Thyroid gland (tissue), 4 donors: ENCODE measurements at regions of chr3 and their contacts with region 1.

Region 1: GRCh38 chr3:110542552-110543150 is 529.0 kb upstream of the NECTIN3 start:
- DNase-seq: no peak
- H3K4me3 ChIP-seq: no peak overlapping the region
- H3K27ac ChIP-seq: no peak overlapping the region
- H3K4me1 ChIP-seq: no peaks in the 10 kb centered on the region
- H3K27me3 ChIP-seq: no peaks in the 10 kb centered on the region
- CTCF ChIP-seq: no peak
- POLR2A ChIP-seq: no peak

Region 2: GRCh38 chr3:109927161-109927560 is 615.5 kb before region 1 on chr3:
- intact Hi-C with region 1: no loop called
- DNase-seq: no peak
- H3K4me3 ChIP-seq: no peak overlapping the region
- H3K27ac ChIP-seq: no peak overlapping the region
- H3K4me1 ChIP-seq: no peaks in the 10 kb centered on the region
- H3K27me3 ChIP-seq: no peaks in the 10 kb centered on the region
- CTCF ChIP-seq: no peak
- POLR2A ChIP-seq: no peak

Region 3: DNA sequence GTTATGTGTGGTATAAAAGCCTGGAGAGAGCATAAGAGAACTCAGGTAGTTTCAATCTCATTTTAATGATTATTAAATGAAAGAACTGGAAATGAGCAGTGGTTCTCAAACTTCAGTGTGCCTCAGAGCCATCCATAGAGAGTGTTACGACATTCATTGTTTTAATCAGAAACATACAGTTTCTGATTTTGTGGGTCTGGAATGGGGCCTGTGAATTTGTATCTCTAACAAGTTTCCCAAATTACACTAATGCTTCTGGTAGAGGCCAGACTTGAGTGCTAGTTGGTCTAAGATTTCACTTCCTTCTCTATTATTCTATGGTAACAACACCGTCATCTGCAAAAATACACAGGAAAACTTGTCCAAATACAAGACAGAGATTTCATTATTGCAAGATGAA is 236.9 kb after region 1 on chr3:
- intact Hi-C with region 1: no loop called
- DNase-seq: no peak
- H3K4me3 ChIP-seq: no peak overlapping the region
- H3K27ac ChIP-seq: no peak overlapping the region
- H3K4me1 ChIP-seq: no peaks in the 10 kb centered on the region
- H3K27me3 ChIP-seq: no peaks in the 10 kb centered on the region
- CTCF ChIP-seq: no peak
- POLR2A ChIP-seq: no peak

Region 4: DNA sequence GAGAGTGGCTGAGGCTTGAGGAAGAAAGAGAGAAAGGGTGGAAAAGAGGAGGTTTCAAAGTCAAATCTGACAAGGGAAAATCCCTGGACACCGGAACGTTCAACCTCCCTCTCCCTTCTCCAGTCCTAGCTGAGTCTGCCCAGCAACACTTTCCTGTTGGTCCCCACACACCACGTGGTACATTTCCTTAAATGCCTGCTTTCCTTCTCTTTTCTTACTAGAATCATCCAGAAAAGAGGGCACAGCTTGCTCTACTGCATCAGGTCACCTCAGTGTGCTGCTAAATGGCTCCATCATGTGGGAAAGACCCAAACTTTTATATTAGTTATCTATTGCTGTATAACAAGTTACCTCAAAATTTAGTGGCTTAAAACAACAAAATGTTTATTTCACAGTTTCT is 710.1 kb after region 1 on chr3:
- intact Hi-C with region 1: no loop called
- DNase-seq: peak; percentile 55 to 68
- H3K4me3 ChIP-seq: no peak overlapping the region
- H3K27ac ChIP-seq: peak overlapping the region in 1 of 3 donors; percentile 41
- H3K4me1 ChIP-seq: peaks cover 0 to 1% of the 10 kb centered on the region in 2 donors
- H3K27me3 ChIP-seq: no peaks in the 10 kb centered on the region
- CTCF ChIP-seq: peak in 4 of 6 experiments; percentile 30 to 64 (median 56)
- POLR2A ChIP-seq: peak in 1 of 2 donors; percentile 58

Region 5: GRCh38 chr3:111386051-111386450 is 843.4 kb after region 1 on chr3:
- intact Hi-C with region 1: loop called (anchors 10 kb)
- DNase-seq: no peak
- H3K4me3 ChIP-seq: no peak overlapping the region
- H3K27ac ChIP-seq: no peak overlapping the region
- H3K4me1 ChIP-seq: no peaks in the 10 kb centered on the region
- H3K27me3 ChIP-seq: no peaks in the 10 kb centered on the region
- CTCF ChIP-seq: no peak
- POLR2A ChIP-seq: no peak